Head of caudate nucleus (tissue), 42 donors: ENCODE measurements at regions of chr12 and their contacts with region 1.

Region 1: DNA sequence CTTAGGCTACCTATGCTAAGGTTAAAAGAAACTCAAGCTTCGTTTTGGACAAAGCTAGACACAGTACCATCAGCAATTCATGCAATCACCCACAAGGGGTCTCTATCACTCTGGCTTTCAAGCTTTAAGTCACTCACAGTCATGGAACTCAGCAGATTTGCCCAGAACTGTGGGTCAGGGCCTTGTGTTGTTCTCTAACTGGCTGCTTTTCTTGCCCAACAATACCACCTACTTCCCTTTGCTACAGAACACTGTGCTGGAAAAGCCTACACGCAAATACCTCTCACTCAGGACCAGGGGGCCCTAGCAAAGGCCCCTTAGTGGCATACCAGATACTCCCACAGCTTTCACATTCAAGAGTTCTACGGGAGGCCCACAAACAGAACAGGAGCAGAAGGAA is 9.1 kb downstream of the NEMP1 start:
- DNase-seq: peak in 33 of 42 donors; percentile 13 to 89 (median 69)

Region 2: DNA sequence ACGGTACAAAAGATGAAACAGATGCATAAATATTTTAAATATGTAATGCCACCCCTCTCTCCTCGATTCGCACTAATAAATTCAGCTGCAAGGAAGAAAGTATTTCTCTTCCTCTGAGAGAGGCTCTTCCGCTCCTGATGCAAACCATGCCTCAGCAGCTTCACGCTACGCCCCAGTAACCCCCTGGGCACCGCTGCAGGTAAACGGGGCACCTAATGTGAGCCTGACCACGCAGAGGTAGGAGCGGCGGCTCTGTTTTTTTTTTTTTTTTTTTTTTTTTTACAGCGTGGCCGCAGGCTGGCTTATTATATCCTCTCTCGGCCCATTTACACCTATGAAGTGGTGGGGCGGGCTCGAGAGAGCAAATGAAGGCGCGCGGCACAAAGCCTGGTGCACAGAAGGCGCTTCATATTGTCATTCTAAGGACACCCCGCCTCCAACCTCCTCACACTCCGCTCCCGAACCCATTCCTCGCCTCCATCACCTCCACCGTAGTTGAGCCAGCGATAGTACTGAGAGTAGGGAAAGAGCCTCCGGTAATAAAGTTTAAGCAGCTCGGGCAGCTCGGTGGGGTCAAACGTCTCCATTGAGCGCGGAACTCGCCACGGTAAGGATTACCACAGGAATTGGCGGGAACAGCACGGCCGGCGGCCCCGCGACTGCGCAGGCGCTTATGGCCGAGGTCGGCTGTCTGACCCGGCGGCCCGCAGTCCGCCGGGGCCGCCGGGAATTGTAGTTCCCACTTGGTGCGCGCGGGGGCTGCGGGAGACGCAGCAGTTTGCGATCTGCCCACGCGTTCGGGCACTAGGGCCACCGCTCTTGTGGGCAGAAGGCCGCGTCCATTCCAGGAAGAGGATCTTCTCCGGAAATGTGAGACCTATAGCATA is 317.6 kb before region 1 on chr12 and contains the start of gene PRIM1:
- intact Hi-C with region 1: loop called (anchors 5 kb)
- DNase-seq: peak; percentile 64 to 94 (median 87)

Region 3: DNA sequence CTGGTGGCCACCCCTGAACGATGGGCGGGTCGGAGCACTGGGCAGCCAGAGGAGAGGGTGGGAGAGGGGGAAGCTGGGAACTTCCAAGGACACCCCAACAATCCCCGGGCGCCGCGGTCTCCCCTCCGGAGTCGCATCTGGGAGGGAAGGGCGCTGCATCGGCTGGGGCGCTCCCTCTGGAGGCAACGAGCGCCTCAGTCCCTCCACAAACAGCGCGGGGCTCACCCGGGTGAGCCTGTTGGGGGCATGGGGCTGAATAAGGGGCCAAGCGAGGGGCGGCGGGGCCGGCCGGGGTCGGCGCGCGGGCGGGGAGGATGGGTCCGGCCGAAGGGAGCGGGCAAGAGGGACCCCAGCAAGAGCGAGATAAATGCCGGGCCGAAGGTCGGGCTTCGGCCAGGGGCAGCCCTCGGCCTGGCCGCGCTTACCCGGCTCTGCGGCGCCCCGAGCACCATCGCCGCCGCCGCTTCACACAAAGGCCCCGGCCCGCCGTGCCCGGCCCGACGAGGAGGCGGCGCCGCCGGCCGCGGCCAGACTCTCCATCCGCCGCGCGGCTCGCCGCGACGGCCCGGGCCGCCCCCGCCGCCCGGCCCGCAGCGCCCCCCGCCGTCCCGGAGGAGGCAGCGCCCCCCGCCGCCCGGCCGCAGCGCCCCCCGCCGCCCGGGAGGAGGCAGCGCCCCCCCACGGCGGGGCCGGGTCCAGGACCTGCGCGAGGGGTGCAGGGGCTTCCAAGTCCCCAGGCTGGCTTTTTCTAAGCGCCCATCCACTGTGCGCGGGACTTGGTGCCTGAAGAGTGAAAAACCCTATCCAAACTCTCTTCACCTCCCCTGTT is 63.3 kb before region 1 on chr12 and contains the start of gene ZBTB39:
- intact Hi-C with region 1: loop called (anchors 5 kb)
- DNase-seq: peak in 38 of 42 donors; percentile 21 to 81 (median 62)

Region 4: DNA sequence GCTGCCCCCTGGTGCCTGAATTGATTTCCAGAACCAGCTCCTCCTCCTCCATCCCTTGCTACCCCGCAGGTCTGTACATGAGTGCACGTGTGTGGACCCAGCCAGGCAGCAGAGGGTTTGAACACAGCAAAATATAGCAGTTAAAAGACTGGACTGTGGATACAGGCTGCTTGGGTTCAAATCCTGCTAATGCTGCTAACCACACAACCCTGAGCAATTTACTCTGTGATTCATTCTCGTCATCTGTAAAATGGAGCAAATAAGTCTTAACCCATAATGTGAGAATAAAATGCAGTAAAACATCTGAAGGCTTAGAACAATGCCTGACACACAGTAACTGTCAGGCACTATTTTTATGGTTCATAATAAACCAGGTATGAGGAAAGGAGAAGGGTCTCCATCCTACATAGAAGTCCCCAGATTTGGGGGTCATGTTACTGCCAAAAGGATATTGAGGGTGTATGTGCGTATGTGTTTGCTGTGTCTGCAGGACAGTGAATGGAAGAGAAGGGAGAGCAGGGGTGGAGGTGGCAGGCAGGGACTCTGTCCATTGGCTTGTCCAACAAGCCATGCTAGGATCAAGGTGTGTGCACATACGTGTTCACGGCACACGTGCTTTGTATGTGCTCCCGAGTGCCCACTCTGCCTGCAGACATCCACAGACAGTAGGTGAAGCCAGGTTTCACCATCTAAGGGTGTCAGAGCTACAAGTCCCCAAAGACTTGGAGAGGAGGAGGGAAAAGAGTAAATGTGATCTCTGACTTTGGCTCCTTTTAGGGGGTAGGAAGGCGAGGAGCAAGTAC is 43.2 kb after region 1 on chr12:
- intact Hi-C with region 1: loop called (anchors 2 kb)
- DNase-seq: peak in 25 of 42 donors; percentile 76 to 93 (median 86)